ENCODE measurements at regions of chr2 and their contacts with region 1.

Region 1: GRCh38 chr2:23404426-23404825 is 19.4 kb downstream of the KLHL29 start:
- DNase-seq: peak; percentile 84
- H3K4me3 ChIP-seq: peak overlapping the region; percentile 19 to 30
- H3K27ac ChIP-seq: peak overlapping the region; percentile 67 to 87
- H3K4me1 ChIP-seq: peaks cover 15 to 23% of the 10 kb centered on the region in 2 experiments; a peak in 3 of 4 replicates
- H3K27me3 ChIP-seq: no peaks in the 10 kb centered on the region
- CTCF ChIP-seq: peak; percentile 63
- EP300 ChIP-seq: peak in 1 of 2 experiments; percentile 62; a peak in 1 of 4 replicates
- RAD21 ChIP-seq: peak; percentile 92

Region 2: GRCh38 chr2:23414871-23415270 is 10.4 kb after region 1 on chr2:
- CTCF ChIA-PET with region 1: interaction called, 39 read pairs
- POLR2A ChIA-PET with region 1: no interaction called
- DNase-seq: peak; percentile 70
- H3K4me3 ChIP-seq: no peak overlapping the region
- H3K27ac ChIP-seq: peak overlapping the region in 1 of 2 experiments; percentile 9; a peak in 1 of 4 replicates
- H3K4me1 ChIP-seq: peaks cover 14 to 36% of the 10 kb centered on the region in 2 experiments; a peak in 3 of 4 replicates
- H3K27me3 ChIP-seq: no peaks in the 10 kb centered on the region
- CTCF ChIP-seq: peak; percentile 42
- EP300 ChIP-seq: no peak
- RAD21 ChIP-seq: peak; percentile 32; the same call in 1 of the 2 replicates

Region 3: GRCh38 chr2:23460228-23460627 is 55.8 kb after region 1 on chr2:
- CTCF ChIA-PET with region 1: interaction called, 20 read pairs
- POLR2A ChIA-PET with region 1: no interaction called
- DNase-seq: no peak
- H3K4me3 ChIP-seq: no peak overlapping the region; a peak in 1 of 4 replicates
- H3K27ac ChIP-seq: no peak overlapping the region
- H3K4me1 ChIP-seq: peaks cover under 1 to 46% of the 10 kb centered on the region in 2 experiments; a peak in 2 of 4 replicates
- H3K27me3 ChIP-seq: no peaks in the 10 kb centered on the region
- CTCF ChIP-seq: peak; percentile 75
- EP300 ChIP-seq: no peak
- RAD21 ChIP-seq: peak; percentile 64

Region 4: GRCh38 chr2:23484275-23484674 is 79.8 kb after region 1 on chr2:
- CTCF ChIA-PET with region 1: no interaction called
- POLR2A ChIA-PET with region 1: no interaction called
- DNase-seq: no peak
- H3K4me3 ChIP-seq: no peak overlapping the region
- H3K27ac ChIP-seq: no peak overlapping the region
- H3K4me1 ChIP-seq: peaks cover 9 to 14% of the 10 kb centered on the region in 2 experiments; a peak in 2 of 4 replicates
- H3K27me3 ChIP-seq: no peaks in the 10 kb centered on the region
- CTCF ChIP-seq: no peak
- EP300 ChIP-seq: no peak
- RAD21 ChIP-seq: no peak

Region 5: GRCh38 chr2:23545396-23545795 is 141.0 kb after region 1 on chr2:
- CTCF ChIA-PET with region 1: interaction called, 32 read pairs
- POLR2A ChIA-PET with region 1: interaction called, 4 read pairs
- DNase-seq: peak; percentile 82
- H3K4me3 ChIP-seq: no peak overlapping the region
- H3K27ac ChIP-seq: peak overlapping the region; percentile 43 to 92; a peak in 3 of 4 replicates
- H3K4me1 ChIP-seq: peaks cover 46 to 84% of the 10 kb centered on the region in 2 experiments; a peak in 3 of 4 replicates
- H3K27me3 ChIP-seq: no peaks in the 10 kb centered on the region
- CTCF ChIP-seq: peak; percentile 48
- EP300 ChIP-seq: no peak; a peak in 1 of 4 replicates
- RAD21 ChIP-seq: peak; percentile 59

Region 6: DNA sequence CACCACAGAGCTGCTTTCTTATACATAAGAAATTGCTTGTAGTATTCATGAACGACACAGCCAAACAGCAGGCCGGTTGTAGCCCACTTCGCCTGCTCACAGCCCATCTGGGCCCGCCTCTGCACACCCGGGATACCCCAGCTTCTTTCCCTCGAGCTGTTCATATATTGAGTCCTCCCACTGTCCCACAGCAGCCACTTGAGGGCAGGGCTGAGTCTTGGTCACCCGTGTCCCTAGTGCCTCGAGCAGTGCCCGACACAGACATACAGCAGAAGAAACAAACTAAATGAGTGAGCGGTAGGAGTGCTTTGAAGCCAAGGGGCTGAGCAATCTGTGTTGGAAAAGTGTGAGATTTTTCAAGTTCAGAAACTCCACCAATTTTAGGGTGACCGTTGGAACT is 232.0 kb after region 1 on chr2:
- CTCF ChIA-PET with region 1: interaction called, 22 read pairs
- POLR2A ChIA-PET with region 1: no interaction called
- DNase-seq: peak; percentile 74
- H3K4me3 ChIP-seq: no peak overlapping the region
- H3K27ac ChIP-seq: peak overlapping the region; percentile 86 to 100
- H3K4me1 ChIP-seq: peaks cover 16 to 49% of the 10 kb centered on the region in 2 experiments
- H3K27me3 ChIP-seq: no peaks in the 10 kb centered on the region
- CTCF ChIP-seq: peak; percentile 45
- EP300 ChIP-seq: no peak
- RAD21 ChIP-seq: peak; percentile 63

Region 7: DNA sequence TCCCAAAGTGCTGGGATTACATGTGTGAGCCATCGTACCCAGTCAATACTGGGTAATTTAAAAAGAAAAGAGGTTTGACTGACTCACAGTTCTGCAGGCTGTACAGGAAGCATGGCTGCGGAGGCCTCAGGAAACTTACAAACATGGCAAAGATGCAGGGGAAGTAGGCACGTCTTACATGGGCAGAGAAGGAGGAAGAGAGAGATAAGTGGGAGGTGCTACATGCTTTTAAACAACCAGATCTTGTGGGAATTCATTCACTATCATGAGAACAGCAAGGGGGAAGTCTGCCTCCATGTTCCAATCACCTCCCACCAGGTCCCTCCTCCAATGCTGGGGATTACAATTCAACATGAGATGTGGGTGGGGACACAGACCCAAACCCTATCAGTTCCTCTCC is 330.0 kb after region 1 on chr2:
- CTCF ChIA-PET with region 1: no interaction called
- POLR2A ChIA-PET with region 1: no interaction called
- DNase-seq: no peak
- H3K4me3 ChIP-seq: no peak overlapping the region
- H3K27ac ChIP-seq: no peak overlapping the region
- H3K4me1 ChIP-seq: no peaks in the 10 kb centered on the region
- H3K27me3 ChIP-seq: no peaks in the 10 kb centered on the region
- CTCF ChIP-seq: no peak
- EP300 ChIP-seq: no peak
- RAD21 ChIP-seq: no peak

Region 8: DNA sequence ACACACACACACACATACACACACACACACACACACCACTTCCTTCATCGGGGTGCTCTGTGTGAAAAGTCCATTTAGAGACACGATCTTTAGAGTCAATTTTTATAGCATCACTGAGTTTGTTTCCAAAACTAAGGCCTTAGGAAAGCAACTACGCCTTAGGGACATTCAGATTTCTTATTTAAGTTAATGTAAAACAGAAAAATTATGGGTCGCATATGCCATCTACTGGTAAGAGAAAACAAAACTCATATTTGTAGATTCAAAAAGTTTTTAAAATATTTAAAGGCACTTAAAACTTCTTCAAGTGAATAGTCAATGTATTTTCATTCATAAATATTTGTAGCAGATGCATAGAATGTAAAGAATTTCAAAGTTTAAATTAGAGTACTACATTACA is 356.3 kb after region 1 on chr2:
- CTCF ChIA-PET with region 1: interaction called, 34 read pairs
- POLR2A ChIA-PET with region 1: no interaction called
- DNase-seq: peak; percentile 21
- H3K4me3 ChIP-seq: no peak overlapping the region
- H3K27ac ChIP-seq: no peak overlapping the region
- H3K4me1 ChIP-seq: peaks cover 0 to 21% of the 10 kb centered on the region in 2 experiments; a peak in 1 of 4 replicates
- H3K27me3 ChIP-seq: no peaks in the 10 kb centered on the region
- CTCF ChIP-seq: peak; percentile 75
- EP300 ChIP-seq: no peak
- RAD21 ChIP-seq: peak; percentile 75

Measured in SK-N-SH (cell line).